PC-3 (cell line): ENCODE measurements at regions of chr14 and their contacts with region 1.

Region 1: GRCh38 chr14:96494331-96494730 is 7.9 kb upstream of the PAPOLA start:
- DNase-seq: no peak
- ATAC-seq: no peak
- H3K4me3 ChIP-seq: no peak overlapping the region
- H3K27ac ChIP-seq: no peak overlapping the region
- H3K4me1 ChIP-seq: peaks cover 8% of the 10 kb centered on the region; the same call in 1 of the 2 replicates
- H3K27me3 ChIP-seq: no peaks in the 10 kb centered on the region
- CTCF ChIP-seq: no peak

Region 2: DNA sequence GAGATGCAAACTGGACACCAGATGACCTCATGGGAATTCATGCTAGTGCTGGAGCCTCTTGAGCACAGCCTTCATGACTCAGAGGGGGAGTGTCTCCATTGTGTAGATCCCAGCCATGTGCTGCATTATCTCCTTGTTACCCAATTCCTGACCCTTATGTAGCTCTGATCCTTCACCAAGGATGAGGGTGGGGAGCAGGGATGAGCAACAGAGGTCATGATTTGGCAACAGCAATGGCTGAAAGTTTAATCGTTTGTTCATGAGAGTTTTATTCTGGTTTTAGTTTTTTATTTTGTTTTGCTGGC is 247.8 kb before region 1 on chr14:
- CTCF ChIA-PET with region 1: no interaction called
- POLR2A ChIA-PET with region 1: no interaction called
- intact Hi-C with region 1: no loop called
- DNase-seq: peak; percentile 31
- ATAC-seq: no peak; the same call in 1 of the 2 replicates
- H3K4me3 ChIP-seq: no peak overlapping the region
- H3K27ac ChIP-seq: no peak overlapping the region
- H3K4me1 ChIP-seq: no peaks in the 10 kb centered on the region
- H3K27me3 ChIP-seq: no peaks in the 10 kb centered on the region; the same call in 1 of the 2 replicates
- CTCF ChIP-seq: no peak

Region 3: GRCh38 chr14:96275177-96276112 is 218.9 kb before region 1 on chr14:
- CTCF ChIA-PET with region 1: no interaction called
- POLR2A ChIA-PET with region 1: no interaction called
- intact Hi-C with region 1: no loop called
- DNase-seq: peak; percentile 60
- ATAC-seq: peak; percentile 74
- H3K4me3 ChIP-seq: no peak overlapping the region
- H3K27ac ChIP-seq: no peak overlapping the region
- H3K4me1 ChIP-seq: no peaks in the 10 kb centered on the region
- H3K27me3 ChIP-seq: no peaks in the 10 kb centered on the region
- CTCF ChIP-seq: peak; percentile 93

Region 4: GRCh38 chr14:96384053-96384452 is 110.3 kb before region 1 on chr14:
- CTCF ChIA-PET with region 1: no interaction called
- POLR2A ChIA-PET with region 1: interaction called, 12 read pairs
- intact Hi-C with region 1: no loop called
- DNase-seq: no peak
- ATAC-seq: no peak
- H3K4me3 ChIP-seq: no peak overlapping the region
- H3K27ac ChIP-seq: no peak overlapping the region
- H3K4me1 ChIP-seq: no peaks in the 10 kb centered on the region
- H3K27me3 ChIP-seq: no peaks in the 10 kb centered on the region
- CTCF ChIP-seq: no peak